CD8-positive, alpha-beta T cell (primary cell): ENCODE measurements at regions of chr21 and their contacts with region 1.

Region 1: DNA sequence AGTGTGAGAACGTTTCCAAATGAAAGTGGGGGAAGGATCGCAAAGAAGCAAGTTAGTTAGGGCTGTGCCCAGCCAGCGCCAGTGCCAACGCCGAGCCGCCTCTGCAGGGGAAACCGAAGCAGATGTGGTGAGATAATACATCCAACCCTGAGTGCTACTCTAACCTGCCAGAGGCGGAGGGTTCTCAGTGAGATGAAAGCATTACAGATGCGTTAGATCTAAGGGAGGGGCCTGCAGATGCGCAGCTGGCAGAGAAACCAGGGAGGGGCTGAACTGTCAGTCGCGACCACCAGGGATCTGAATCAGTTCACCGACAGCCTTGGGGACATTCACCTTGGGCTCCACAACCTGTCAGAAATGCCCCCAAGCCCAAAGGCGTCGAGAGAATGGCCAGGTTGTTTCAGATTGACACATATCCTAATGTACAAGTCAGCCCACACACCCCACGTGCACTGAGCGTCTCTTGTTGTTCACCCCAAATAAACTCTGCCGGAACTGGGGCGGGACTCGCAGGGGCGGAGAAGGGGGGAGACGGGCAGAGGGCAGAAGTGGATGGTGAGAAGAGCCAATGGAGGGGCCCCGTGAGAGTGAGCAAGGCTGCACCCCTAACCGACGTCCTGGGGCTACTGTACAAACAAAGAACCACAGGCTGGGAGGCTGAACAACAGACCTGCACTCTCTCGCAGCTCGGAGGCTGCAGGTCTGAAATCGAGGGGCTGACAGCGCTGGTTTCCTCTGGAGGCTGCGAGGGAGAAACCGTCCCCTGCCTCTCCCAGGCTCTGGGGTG is 8.7 kb upstream of the UMODL1 start:
- DNase-seq: peak; percentile 86 to 98 (median 92)
- ATAC-seq: peak; percentile 83
- H3K4me3 ChIP-seq: peak overlapping the region; percentile 56 to 59
- H3K4me3 Mint-ChIP-seq: peak overlapping the region; percentile 89
- H3K27ac ChIP-seq: peak overlapping the region; percentile 82 to 83
- H3K27ac Mint-ChIP-seq: peak overlapping the region; percentile 99
- H3K4me1 ChIP-seq: peaks cover 32% of the 10 kb centered on the region
- H3K4me1 Mint-ChIP-seq: peaks cover 64% of the 10 kb centered on the region
- H3K27me3 ChIP-seq: peaks cover 0 to 2% of the 10 kb centered on the region in 2 experiments
- H3K27me3 Mint-ChIP-seq: no peaks in the 10 kb centered on the region
- CTCF ChIP-seq: no peak

Region 2: DNA sequence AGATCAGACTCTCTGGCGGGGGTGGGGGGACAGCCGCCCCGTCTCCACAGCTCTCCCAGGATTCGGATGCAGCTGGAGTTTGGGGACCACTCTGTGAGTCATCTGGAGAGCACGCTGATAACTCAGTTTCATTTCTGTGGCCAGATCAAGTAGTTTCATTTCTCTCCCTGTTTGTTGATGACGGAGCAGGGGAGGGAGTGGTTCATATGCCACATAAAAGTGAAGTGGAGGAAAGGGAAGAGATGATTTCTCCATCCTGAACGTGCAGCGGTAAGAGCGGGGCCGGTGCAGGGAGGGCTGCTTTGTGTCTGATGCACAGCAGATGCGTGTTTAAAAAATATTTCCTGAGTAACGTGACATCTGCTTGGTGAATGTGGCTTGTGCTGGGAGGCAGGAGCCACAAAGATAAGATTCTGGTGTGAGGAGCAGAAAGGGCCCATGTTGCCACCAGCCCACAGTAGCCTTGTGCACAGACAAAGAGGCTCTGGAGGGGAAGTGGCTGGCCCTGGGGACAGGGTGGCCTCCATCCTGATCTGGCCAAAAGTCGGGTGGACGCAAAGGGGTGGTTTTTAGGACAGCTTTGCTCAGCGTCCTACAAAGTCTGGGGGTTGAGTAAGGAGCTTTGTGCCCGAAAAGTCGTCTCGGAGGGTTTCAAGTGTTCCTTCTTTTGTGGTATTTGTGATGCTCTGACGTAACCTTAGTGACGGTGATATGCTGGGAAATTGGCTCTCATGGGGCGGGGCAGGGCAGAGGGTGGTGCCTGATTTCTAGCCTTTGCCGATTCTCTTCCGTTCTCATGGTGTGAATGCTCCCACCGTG is 700.4 kb before region 1 on chr21 and contains the start of gene MX2:
- CTCF ChIA-PET with region 1: no interaction called
- POLR2A ChIA-PET with region 1: no interaction called
- intact Hi-C with region 1: loop called in 1 of 2 experiments (anchors 5 kb)
- DNase-seq: peak; percentile 60 to 97 (median 83)
- ATAC-seq: peak; percentile 75
- H3K4me3 ChIP-seq: peak within 1 kb of the TSS; percentile 74 to 79
- H3K4me3 Mint-ChIP-seq: peak within 1 kb of the TSS; percentile 89
- H3K27ac ChIP-seq: peak within 1 kb of the TSS; percentile 98 to 99
- H3K27ac Mint-ChIP-seq: peak within 1 kb of the TSS; percentile 100
- H3K4me1 ChIP-seq: peaks cover 24% of the 10 kb centered on the region
- H3K4me1 Mint-ChIP-seq: peaks cover 56% of the 10 kb centered on the region
- H3K27me3 ChIP-seq: no peaks in the 10 kb centered on the region
- H3K27me3 Mint-ChIP-seq: no peaks in the 10 kb centered on the region
- CTCF ChIP-seq: no peak
- total RNA-seq, gene MX2: 58.5 to 61.5 TPM

Region 3: DNA sequence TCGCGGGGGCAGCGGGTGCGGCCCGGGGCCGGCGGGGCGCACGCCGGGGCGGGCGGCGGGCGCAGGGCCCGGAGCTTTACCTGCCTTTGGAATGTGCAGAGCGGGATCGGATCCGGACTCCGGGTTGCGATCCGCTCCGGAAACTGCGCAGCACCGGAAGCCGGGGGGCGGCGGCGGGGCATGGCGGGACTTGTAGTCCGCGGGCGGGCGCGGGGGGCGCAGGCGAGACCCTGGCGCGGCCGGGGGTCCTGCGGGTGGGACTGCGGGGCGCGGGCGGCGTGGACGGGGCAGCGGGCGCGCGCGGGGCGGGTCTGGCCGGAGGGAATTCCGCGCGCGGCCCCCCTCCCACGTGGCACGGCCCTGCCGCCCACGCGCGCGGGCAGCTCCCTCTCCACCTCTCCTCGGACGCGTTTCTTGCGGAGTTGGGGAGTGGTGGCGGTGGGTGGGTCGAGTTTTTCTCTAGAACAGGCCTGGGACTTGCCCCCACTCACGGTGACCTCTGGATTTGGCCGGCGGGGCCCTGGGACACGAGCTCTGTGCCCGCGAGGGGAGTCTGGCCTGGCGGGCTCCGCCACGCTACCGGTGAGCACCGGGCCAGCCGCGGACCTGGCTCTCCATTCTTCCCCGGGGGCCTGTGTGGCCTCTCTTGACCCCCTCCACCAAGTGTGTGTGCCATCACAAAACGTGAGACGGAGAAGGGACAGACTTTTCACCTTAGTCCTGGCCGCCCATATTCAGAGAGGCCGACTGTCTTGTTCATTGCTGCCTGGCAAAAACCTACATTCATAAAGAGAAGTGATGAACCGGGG is 183.0 kb before region 1 on chr21 and contains the start of gene PRDM15:
- CTCF ChIA-PET with region 1: no interaction called
- POLR2A ChIA-PET with region 1: interaction called, 19 read pairs
- intact Hi-C with region 1: loop called (anchors 1 to 2 kb)
- DNase-seq: peak; percentile 55 to 89 (median 78)
- ATAC-seq: peak; percentile 68
- H3K4me3 ChIP-seq: peak within 1 kb of the TSS; percentile 69 to 89
- H3K4me3 Mint-ChIP-seq: peak within 1 kb of the TSS; percentile 90
- H3K27ac ChIP-seq: peak within 1 kb of the TSS; percentile 71 to 78
- H3K27ac Mint-ChIP-seq: peak within 1 kb of the TSS; percentile 93
- H3K4me1 ChIP-seq: peaks cover 14% of the 10 kb centered on the region
- H3K4me1 Mint-ChIP-seq: peaks cover 27% of the 10 kb centered on the region
- H3K27me3 ChIP-seq: no peaks in the 10 kb centered on the region
- H3K27me3 Mint-ChIP-seq: no peaks in the 10 kb centered on the region
- CTCF ChIP-seq: no peak
- total RNA-seq, gene PRDM15: 8.5 to 9.2 TPM

Region 4: GRCh38 chr21:42002421-42002958 is 59.9 kb before region 1 on chr21:
- CTCF ChIA-PET with region 1: interaction called, 18 read pairs
- POLR2A ChIA-PET with region 1: interaction called, 12 read pairs
- intact Hi-C with region 1: no loop called
- DNase-seq: peak in 7 of 9 experiments; percentile 15 to 54 (median 30)
- ATAC-seq: peak; percentile 68
- H3K4me3 ChIP-seq: no peak overlapping the region
- H3K4me3 Mint-ChIP-seq: peak overlapping the region; percentile 1
- H3K27ac ChIP-seq: no peak overlapping the region
- H3K27ac Mint-ChIP-seq: no peak overlapping the region
- H3K4me1 ChIP-seq: no peaks in the 10 kb centered on the region
- H3K4me1 Mint-ChIP-seq: peaks cover 28% of the 10 kb centered on the region
- H3K27me3 ChIP-seq: no peaks in the 10 kb centered on the region
- H3K27me3 Mint-ChIP-seq: no peaks in the 10 kb centered on the region
- CTCF ChIP-seq: no peak

Region 5: DNA sequence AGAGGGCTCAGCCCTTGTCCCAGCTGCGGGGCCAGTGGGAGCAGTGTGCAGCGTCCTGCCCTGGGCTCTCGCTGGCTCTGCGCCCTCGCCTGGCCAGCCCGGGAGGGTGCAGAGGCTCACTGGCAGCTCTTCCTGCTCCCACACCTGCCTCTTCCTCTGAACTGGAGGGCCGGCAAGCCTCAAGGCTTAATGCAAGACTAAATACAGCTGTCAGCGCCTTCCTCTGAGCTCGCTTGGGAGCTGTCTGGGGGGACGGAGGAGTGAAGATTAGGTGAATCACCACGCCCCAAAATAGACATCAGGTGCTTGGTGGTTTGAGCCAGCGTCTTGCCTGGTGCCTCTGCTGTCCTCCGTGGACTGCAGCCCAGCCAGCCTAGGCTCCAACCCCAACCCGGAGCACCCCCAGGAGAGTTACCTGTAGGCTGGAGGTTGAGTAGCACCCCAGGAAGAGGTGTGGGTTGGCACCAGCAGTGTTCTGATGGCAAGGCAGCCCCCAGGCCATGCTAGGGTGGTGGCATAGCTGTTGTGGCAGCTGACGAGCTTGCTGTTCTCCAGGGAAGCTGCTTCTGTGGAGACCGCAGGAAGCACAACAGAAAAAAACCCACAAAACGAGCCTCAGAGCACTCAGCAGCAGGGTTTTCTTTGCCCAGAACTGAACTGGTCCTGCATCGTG is 45.6 kb after region 1 on chr21:
- CTCF ChIA-PET with region 1: interaction called, 26 read pairs
- POLR2A ChIA-PET with region 1: interaction called, 22 read pairs
- intact Hi-C with region 1: loop called (anchors 1 kb)
- DNase-seq: peak; percentile 45 to 87 (median 68)
- ATAC-seq: peak; percentile 99
- H3K4me3 ChIP-seq: peak overlapping the region in 1 of 2 experiments; percentile 28
- H3K4me3 Mint-ChIP-seq: peak overlapping the region; percentile 69
- H3K27ac ChIP-seq: no peak overlapping the region
- H3K27ac Mint-ChIP-seq: peak overlapping the region; percentile 62
- H3K4me1 ChIP-seq: peaks cover 20% of the 10 kb centered on the region
- H3K4me1 Mint-ChIP-seq: peaks cover 9% of the 10 kb centered on the region
- H3K27me3 ChIP-seq: no peaks in the 10 kb centered on the region
- H3K27me3 Mint-ChIP-seq: peaks cover 4% of the 10 kb centered on the region
- CTCF ChIP-seq: peak; percentile 74

Region 6: DNA sequence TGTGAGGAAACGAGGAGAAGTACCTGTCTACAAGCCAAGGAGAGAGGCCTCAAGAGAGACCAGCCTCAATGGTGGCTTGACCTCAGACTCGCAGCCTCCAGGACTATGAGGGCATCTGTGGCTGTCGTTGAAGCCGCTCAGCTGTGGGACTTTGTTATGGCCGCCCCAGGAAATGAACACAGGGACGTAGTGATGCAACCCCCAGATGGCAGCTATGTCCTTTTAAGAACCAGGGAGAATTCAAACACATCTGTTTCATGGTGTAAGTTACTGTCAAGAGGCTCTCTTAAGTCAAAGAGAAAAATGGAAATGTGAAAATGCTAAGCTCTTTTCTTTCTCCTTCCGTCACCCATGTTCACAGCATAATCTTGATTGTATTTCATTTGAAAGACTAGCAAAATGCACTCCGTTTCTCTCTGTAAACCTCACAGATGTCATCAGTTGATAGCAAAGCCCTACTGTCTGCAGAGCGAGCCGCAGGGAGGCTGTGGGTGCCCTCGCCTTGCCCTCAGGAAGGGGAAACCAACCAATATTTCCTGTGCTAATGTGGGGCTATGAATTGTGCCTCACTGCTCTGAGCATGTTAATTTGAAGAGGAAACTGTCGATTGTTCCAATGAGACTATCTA is 362.6 kb after region 1 on chr21:
- CTCF ChIA-PET with region 1: no interaction called
- POLR2A ChIA-PET with region 1: no interaction called
- intact Hi-C with region 1: loop called in 1 of 2 experiments (anchors 10 kb)
- DNase-seq: peak; percentile 66 to 94 (median 81)
- ATAC-seq: peak; percentile 80
- H3K4me3 ChIP-seq: peak overlapping the region; percentile 27 to 29
- H3K4me3 Mint-ChIP-seq: peak overlapping the region; percentile 67
- H3K27ac ChIP-seq: peak overlapping the region; percentile 63 to 67
- H3K27ac Mint-ChIP-seq: peak overlapping the region; percentile 91
- H3K4me1 ChIP-seq: peaks cover 65% of the 10 kb centered on the region
- H3K4me1 Mint-ChIP-seq: peaks cover 83% of the 10 kb centered on the region
- H3K27me3 ChIP-seq: peaks cover 0 to 4% of the 10 kb centered on the region in 2 experiments
- H3K27me3 Mint-ChIP-seq: no peaks in the 10 kb centered on the region
- CTCF ChIP-seq: no peak